PC-9 (cell line): ENCODE measurements at regions of chr12 and their contacts with region 1.

Region 1: DNA sequence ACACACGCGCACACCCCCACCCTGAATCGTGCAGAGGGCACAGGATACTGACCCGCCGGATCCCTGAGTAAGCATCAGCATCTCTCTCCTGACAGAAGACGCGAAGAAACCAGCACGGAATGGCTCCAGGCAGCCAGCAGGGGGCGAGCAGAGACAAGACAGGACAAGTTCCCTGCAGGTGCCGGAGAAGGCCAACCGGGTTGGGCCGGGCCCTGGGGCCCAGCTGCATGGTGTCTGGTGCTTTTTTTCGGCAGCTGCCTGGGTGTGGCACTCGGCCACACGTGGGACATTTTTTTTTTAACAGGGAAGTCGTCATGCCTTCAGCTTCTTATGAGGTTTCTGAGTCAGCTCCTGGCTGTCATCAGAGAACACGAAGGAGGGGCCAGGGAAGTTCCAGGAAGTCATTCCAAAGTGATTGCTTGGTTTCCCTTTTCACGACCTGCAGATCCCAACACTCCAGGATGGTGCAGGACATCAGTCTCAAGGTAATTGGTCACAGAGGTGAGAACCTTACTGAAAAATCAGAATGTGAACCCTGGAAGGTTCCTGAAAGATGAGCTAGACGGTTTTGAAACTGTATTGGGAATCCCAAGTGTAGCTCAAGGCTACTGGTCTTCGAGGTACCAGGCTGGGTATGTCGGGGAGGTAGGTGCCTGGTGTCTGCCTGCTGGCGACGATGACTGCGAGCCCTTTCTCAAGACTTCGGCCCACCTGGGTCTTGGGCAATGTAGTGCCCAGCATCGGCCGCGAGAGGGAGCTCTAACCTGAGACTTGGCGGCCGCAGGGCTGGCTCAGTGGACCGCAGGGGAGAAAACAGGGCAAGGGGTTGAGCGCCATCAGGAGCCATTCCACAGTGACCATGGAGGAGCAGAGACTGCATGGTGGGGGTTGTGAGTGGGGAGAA is 190.8 kb upstream of the PRMT8 start:
- DNase-seq: peak; percentile 97
- H3K4me3 ChIP-seq: peak overlapping the region; percentile 35; the same call in 1 of the 2 replicates
- H3K27ac ChIP-seq: peak overlapping the region; percentile 89
- H3K4me1 ChIP-seq: peaks cover 31% of the 10 kb centered on the region
- H3K27me3 ChIP-seq: peaks cover 30% of the 10 kb centered on the region
- CTCF ChIP-seq: peak; percentile 100

Region 2: GRCh38 chr12:3049611-3050249 is 250.5 kb before region 1 on chr12:
- CTCF ChIA-PET with region 1: no interaction called
- POLR2A ChIA-PET with region 1: no interaction called
- intact Hi-C with region 1: no loop called
- DNase-seq: no peak
- H3K4me3 ChIP-seq: no peak overlapping the region
- H3K27ac ChIP-seq: no peak overlapping the region
- H3K4me1 ChIP-seq: no peaks in the 10 kb centered on the region
- H3K27me3 ChIP-seq: 0 out of 2 replicates have a peak, but pooled peaks cover 7% of the 10 kb centered on the region
- CTCF ChIP-seq: no peak

Region 3: GRCh38 chr12:3313675-3314663 is 13.8 kb after region 1 on chr12:
- CTCF ChIA-PET with region 1: interaction called, 29 read pairs
- POLR2A ChIA-PET with region 1: interaction called, 10 read pairs
- intact Hi-C with region 1: loop called (anchors 1 kb)
- DNase-seq: peak; percentile 19 to 47
- H3K4me3 ChIP-seq: no peak overlapping the region
- H3K27ac ChIP-seq: no peak overlapping the region
- H3K4me1 ChIP-seq: peaks cover 81% of the 10 kb centered on the region
- H3K27me3 ChIP-seq: no peaks in the 10 kb centered on the region
- CTCF ChIP-seq: peak; percentile 65

Region 4: GRCh38 chr12:3376779-3377455 is 76.7 kb after region 1 on chr12:
- CTCF ChIA-PET with region 1: no interaction called
- POLR2A ChIA-PET with region 1: no interaction called
- intact Hi-C with region 1: no loop called
- DNase-seq: peak in 1 of 2 experiments; percentile 11
- H3K4me3 ChIP-seq: no peak overlapping the region
- H3K27ac ChIP-seq: no peak overlapping the region
- H3K4me1 ChIP-seq: no peaks in the 10 kb centered on the region
- H3K27me3 ChIP-seq: peaks cover 83% of the 10 kb centered on the region
- CTCF ChIP-seq: no peak

Region 5: DNA sequence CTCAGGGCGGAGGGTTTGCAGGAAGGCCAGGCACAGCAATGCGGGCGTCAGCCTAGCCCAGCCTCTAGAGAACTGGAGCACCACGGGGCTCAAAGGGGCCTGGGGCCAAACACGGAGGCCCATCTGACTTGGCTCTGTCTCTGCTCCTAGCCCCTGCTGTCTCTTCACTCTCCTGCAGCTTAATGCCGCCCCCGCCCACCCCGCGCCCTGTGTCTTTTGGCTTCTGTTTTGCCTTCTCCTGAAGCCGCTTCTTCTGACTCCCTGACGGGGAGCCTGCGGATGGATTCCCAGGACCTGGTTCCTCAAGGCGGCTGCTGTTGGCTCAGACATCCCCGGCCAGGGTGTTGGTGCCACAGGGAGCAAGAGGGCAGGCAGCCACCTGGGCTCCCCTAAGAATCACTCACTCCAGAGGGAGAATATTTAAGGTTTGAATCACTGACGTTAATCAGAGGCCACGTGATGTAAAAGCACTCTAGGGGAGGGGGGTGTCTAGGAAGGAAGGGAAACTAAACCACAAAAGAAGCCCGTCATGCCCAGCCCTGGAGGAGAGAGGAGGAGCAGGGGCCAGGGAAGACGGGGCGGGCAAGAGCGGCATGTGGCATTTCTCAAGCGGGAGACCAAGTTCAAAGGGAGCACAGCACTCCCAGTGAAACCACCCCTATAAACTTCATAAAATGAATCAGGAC is 154.0 kb after region 1 on chr12:
- CTCF ChIA-PET with region 1: interaction called, 4 read pairs
- POLR2A ChIA-PET with region 1: no interaction called
- intact Hi-C with region 1: loop called (anchors 2 kb)
- DNase-seq: peak; percentile 35 to 82
- H3K4me3 ChIP-seq: no peak overlapping the region
- H3K27ac ChIP-seq: peak overlapping the region; percentile 52; the same call in 1 of the 2 replicates
- H3K4me1 ChIP-seq: peaks cover 7% of the 10 kb centered on the region; the same call in 1 of the 2 replicates
- H3K27me3 ChIP-seq: peaks cover 11% of the 10 kb centered on the region; the same call in 1 of the 2 replicates
- CTCF ChIP-seq: no peak

Region 6: GRCh38 chr12:3641428-3642018 is 341.3 kb after region 1 on chr12:
- CTCF ChIA-PET with region 1: no interaction called
- POLR2A ChIA-PET with region 1: no interaction called
- intact Hi-C with region 1: loop called (anchors 10 kb)
- DNase-seq: no peak
- H3K4me3 ChIP-seq: no peak overlapping the region
- H3K27ac ChIP-seq: no peak overlapping the region
- H3K4me1 ChIP-seq: no peaks in the 10 kb centered on the region
- H3K27me3 ChIP-seq: peaks cover 89% of the 10 kb centered on the region
- CTCF ChIP-seq: no peak

Region 7: DNA sequence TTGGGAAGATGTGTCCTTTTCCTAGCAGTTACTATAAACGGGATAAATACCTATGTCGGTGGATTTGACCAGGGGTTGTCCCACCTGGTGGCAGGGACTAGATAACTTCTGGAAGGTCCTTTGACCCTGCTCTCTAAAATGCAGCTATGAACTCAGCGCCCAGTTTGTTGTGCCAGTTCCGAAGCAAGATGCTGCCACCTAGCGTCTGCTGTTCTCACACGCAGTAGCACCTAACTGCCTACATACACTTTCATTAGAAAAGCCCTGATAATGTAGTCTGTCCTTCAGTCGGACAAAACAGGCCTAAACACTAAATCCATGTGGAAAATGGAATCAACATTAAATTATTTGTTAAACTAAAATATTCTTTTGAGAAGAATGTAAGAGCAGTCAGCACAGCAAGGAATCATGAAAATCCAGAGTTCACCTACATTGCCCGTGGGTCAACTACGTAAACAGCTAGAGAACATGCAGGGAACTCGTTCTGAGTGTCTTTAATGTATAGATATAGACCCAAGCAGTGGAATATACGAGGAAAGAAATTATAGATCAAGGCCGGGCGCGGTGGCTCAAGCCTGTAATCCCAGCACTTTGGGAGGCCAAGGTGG is 503.8 kb after region 1 on chr12:
- CTCF ChIA-PET with region 1: interaction called, 31 read pairs
- POLR2A ChIA-PET with region 1: no interaction called
- intact Hi-C with region 1: loop called (anchors 1 kb)
- DNase-seq: peak; percentile 52 to 64
- H3K4me3 ChIP-seq: no peak overlapping the region
- H3K27ac ChIP-seq: no peak overlapping the region
- H3K4me1 ChIP-seq: no peaks in the 10 kb centered on the region
- H3K27me3 ChIP-seq: peaks cover 53% of the 10 kb centered on the region
- CTCF ChIP-seq: peak; percentile 94

Region 8: GRCh38 chr12:4276524-4277204 is 976.5 kb after region 1 on chr12:
- CTCF ChIA-PET with region 1: interaction called, 14 read pairs
- POLR2A ChIA-PET with region 1: no interaction called
- intact Hi-C with region 1: loop called (anchors 2 kb)
- DNase-seq: peak; percentile 57 to 73
- H3K4me3 ChIP-seq: no peak overlapping the region
- H3K27ac ChIP-seq: no peak overlapping the region
- H3K4me1 ChIP-seq: no peaks in the 10 kb centered on the region
- H3K27me3 ChIP-seq: peaks cover 89% of the 10 kb centered on the region
- CTCF ChIP-seq: peak; percentile 98